ENCODE measurements at regions of chr15 and their contacts with region 1.

Region 1: GRCh38 chr15:60315878-60316277 is 81.9 kb downstream of the ANXA2 start:
- DNase-seq: no peak
- H3K4me3 ChIP-seq: no peak overlapping the region
- H3K27ac ChIP-seq: no peak overlapping the region
- H3K27me3 ChIP-seq: peaks cover 0 to 3% (median 0%) of the 10 kb centered on the region in 45 donors
- CTCF ChIP-seq: no peak

Region 2: DNA sequence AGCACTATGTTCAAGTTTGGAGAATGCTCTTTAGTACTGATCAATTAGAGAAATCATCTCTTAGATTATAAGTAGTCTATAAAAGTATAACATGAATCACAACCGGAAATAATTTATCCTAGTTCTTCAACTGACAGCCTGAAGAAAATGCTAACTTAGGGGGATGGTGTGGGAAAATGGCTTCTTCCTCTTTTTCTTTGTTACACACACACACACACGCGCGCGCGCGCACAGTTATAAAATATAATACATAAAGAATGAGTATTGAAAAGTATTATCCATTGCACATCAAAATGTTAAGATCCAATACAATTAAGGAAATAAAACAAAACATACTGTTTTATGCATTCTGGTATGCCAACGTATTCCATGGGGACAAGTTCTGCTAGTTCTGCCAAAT is 647.3 kb before region 1 on chr15:
- intact Hi-C with region 1: no loop called
- DNase-seq: no peak
- H3K4me3 ChIP-seq: no peak overlapping the region
- H3K27ac ChIP-seq: no peak overlapping the region
- H3K27me3 ChIP-seq: no peaks in the 10 kb centered on the region
- CTCF ChIP-seq: no peak

Region 3: GRCh38 chr15:59741274-59741906 is 574.5 kb before region 1 on chr15:
- intact Hi-C with region 1: loop called in 1 of 2 experiments (anchors 10 kb)
- DNase-seq: no peak
- H3K4me3 ChIP-seq: no peak overlapping the region
- H3K27ac ChIP-seq: no peak overlapping the region
- H3K27me3 ChIP-seq: peaks cover 0 to 46% (median 17%) of the 10 kb centered on the region in 45 donors
- CTCF ChIP-seq: peak in 15 of 56 donors; percentile 10 to 40 (median 19)